Endothelial cell of umbilical vein (primary cell): ENCODE measurements at regions of chr9 and their contacts with region 1.

Region 1: DNA sequence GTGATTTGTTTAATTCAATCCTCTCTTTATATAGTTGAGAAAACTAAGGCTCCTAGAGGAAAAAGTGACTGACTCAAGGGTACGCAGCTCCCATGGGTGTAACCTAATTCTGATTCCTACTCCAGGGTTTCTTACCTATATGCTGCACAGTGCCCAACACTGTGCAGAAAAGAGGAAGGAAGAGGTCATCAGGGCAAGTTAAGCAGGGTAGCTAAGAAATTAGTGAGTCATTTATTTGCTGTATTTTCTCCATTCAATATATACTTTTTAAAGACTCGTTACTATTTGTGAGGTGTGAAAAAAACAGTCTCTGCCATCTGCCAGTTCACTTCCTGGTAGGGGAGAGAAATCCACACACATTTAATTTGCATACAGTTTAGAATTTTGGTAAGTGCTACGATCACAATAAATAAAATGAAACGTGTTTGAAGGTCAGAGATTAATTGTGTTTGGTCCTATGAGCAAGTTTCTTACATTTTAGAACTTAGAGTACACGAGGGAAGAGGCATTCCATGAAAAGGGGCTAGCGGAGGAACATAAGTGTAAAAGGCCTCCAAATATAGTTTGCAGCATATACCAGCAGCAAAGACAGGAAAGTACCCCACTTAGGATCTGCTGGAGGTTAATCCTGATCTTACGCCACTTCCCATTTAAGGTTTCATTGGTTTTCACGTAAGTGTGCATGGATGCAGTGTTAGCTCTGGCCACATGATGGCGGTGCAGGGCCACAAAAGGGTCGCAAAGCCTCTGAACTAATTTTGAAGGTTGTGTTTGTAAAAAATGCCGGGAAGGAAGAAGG is 59.9 kb upstream of the TLR4 start:
- DNase-seq: peak; percentile 86
- H3K4me3 ChIP-seq: no peak overlapping the region
- H3K27ac ChIP-seq: no peak overlapping the region
- H3K4me1 ChIP-seq: peaks cover 6% of the 10 kb centered on the region
- H3K27me3 ChIP-seq: peaks cover 9 to 15% of the 10 kb centered on the region in 2 experiments
- CTCF ChIP-seq: peak; percentile 89 to 97
- POLR2A ChIP-seq: no peak

Region 2: GRCh38 chr9:116966199-116966598 is 678.1 kb before region 1 on chr9:
- CTCF ChIA-PET with region 1: no interaction called
- POLR2A ChIA-PET with region 1: no interaction called
- dilution Hi-C with region 1: no loop called
- intact Hi-C with region 1: no loop called
- DNase-seq: no peak
- H3K4me3 ChIP-seq: no peak overlapping the region
- H3K27ac ChIP-seq: no peak overlapping the region
- H3K4me1 ChIP-seq: no peaks in the 10 kb centered on the region
- H3K27me3 ChIP-seq: no peaks in the 10 kb centered on the region
- CTCF ChIP-seq: no peak
- POLR2A ChIP-seq: no peak

Region 3: DNA sequence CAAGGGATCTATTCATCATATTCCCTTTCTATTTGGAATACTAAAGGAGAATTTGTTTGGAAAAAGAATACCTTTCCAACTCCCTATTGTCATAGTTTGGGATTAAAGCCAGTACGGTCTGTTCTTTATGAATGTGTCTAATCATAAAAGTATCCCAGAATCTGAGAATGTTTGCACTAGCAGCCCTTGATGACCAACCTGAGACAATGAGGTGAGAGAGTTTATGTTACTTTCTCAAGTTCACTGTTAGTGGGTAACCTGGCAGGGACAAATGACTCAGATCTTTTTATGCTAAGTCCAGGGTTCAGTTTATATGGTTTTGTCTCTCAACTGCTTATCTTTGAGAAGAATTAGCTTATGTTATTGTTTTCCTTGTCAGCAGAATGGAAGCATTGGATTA is 34.5 kb after region 1 on chr9:
- CTCF ChIA-PET with region 1: interaction called, 11 read pairs
- POLR2A ChIA-PET with region 1: no interaction called
- dilution Hi-C with region 1: no loop called
- intact Hi-C with region 1: loop called (anchors 1 kb)
- DNase-seq: peak; percentile 82
- H3K4me3 ChIP-seq: peak overlapping the region in 2 of 3 experiments; percentile 43 to 68
- H3K27ac ChIP-seq: peak overlapping the region; percentile 85
- H3K4me1 ChIP-seq: peaks cover 45% of the 10 kb centered on the region
- H3K27me3 ChIP-seq: no peaks in the 10 kb centered on the region
- CTCF ChIP-seq: no peak
- POLR2A ChIP-seq: no peak

Region 4: DNA sequence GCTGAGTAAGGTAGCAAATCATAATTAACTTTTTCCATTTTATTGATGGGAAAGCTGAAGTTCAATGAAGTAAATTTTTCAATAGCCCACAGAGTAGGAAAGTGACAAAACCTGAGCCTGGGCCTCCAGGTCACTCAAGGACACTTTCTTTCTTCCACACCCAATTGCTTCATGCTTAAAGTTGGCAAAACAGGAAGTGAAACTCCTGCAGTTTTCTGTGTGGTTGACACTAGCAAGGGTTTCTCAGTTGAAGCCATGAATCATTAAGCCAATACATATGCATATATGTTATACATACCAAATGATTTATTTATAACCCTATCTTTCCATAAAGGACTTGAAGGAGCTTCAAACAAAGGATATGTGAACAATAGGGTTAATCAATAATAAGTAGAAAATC is 73.8 kb after region 1 on chr9:
- CTCF ChIA-PET with region 1: interaction called, 3 read pairs
- POLR2A ChIA-PET with region 1: no interaction called
- dilution Hi-C with region 1: no loop called
- intact Hi-C with region 1: loop called (anchors 2 kb)
- DNase-seq: peak; percentile 54
- H3K4me3 ChIP-seq: no peak overlapping the region
- H3K27ac ChIP-seq: no peak overlapping the region
- H3K4me1 ChIP-seq: peaks cover 28% of the 10 kb centered on the region
- H3K27me3 ChIP-seq: no peaks in the 10 kb centered on the region
- CTCF ChIP-seq: no peak
- POLR2A ChIP-seq: no peak

Region 5: GRCh38 chr9:117768735-117769400 is 124.5 kb after region 1 on chr9:
- CTCF ChIA-PET with region 1: no interaction called
- POLR2A ChIA-PET with region 1: no interaction called
- dilution Hi-C with region 1: no loop called
- intact Hi-C with region 1: no loop called
- DNase-seq: no peak
- H3K4me3 ChIP-seq: no peak overlapping the region
- H3K27ac ChIP-seq: no peak overlapping the region
- H3K4me1 ChIP-seq: no peaks in the 10 kb centered on the region
- H3K27me3 ChIP-seq: no peaks in the 10 kb centered on the region
- CTCF ChIP-seq: no peak
- POLR2A ChIP-seq: no peak

Region 6: DNA sequence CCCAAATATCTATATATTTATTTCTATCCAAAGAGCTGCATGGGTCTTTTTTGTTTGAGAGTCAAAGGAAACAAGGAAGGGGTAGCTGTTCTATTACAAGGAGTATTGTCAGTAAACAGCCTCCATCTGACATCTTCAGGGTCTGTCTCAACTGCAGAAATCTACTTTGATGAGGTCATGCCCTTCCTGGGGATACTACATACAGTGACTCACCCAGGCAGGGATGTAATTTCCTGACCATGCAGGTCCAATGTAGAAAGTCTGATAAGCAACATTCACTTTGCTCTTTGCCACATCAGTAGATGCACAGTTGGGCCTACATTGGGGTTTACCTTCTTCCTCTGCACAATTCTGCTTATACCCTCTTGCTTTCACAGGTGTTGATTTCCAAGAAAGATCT is 225.4 kb after region 1 on chr9:
- CTCF ChIA-PET with region 1: no interaction called
- POLR2A ChIA-PET with region 1: no interaction called
- dilution Hi-C with region 1: no loop called
- intact Hi-C with region 1: loop called (anchors 10 kb)
- DNase-seq: no peak
- H3K4me3 ChIP-seq: no peak overlapping the region
- H3K27ac ChIP-seq: no peak overlapping the region
- H3K4me1 ChIP-seq: no peaks in the 10 kb centered on the region
- H3K27me3 ChIP-seq: no peaks in the 10 kb centered on the region
- CTCF ChIP-seq: no peak
- POLR2A ChIP-seq: no peak

Region 7: GRCh38 chr9:118170032-118170955 is 526.0 kb after region 1 on chr9:
- CTCF ChIA-PET with region 1: no interaction called
- POLR2A ChIA-PET with region 1: no interaction called
- dilution Hi-C with region 1: no loop called
- intact Hi-C with region 1: loop called (anchors 1 kb)
- DNase-seq: peak; percentile 42
- H3K4me3 ChIP-seq: no peak overlapping the region
- H3K27ac ChIP-seq: no peak overlapping the region
- H3K4me1 ChIP-seq: no peaks in the 10 kb centered on the region
- H3K27me3 ChIP-seq: no peaks in the 10 kb centered on the region
- CTCF ChIP-seq: peak; percentile 53 to 56
- POLR2A ChIP-seq: no peak

Region 8: DNA sequence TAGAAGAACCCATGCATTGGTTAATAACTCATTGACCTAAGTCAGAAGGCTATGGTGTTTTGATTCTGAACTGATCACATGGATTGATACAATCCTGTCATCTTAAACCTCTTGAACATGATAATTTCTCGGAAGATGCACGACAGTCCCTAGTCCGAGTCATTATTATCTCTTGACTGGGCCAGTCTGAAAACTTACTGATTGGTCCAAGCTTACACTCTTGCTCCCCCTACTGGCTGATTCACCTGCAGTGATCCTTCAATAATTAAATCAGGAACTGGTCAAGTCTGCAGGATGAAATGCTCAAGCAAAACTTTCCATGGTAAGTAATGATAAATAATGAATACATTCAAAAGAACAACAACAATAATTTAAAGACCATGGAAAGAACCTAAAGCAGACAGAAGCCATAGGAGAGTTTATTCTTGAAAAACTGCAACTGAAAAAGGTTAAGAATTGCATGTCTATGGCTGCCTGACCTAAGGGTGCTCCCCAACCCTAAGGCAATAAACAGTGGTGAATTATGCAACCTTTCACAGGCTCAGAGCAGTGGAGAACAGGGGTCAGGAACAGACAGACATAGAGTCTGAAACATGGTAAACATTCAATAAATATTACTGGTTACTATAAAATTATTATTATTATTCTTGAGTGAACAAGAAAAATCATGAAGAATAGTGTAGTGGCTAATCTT is 1645.6 kb after region 1 on chr9:
- CTCF ChIA-PET with region 1: no interaction called
- POLR2A ChIA-PET with region 1: no interaction called
- dilution Hi-C with region 1: no loop called
- intact Hi-C with region 1: loop called (anchors 1 kb)
- DNase-seq: peak; percentile 26
- H3K4me3 ChIP-seq: no peak overlapping the region
- H3K27ac ChIP-seq: no peak overlapping the region
- H3K4me1 ChIP-seq: no peaks in the 10 kb centered on the region
- H3K27me3 ChIP-seq: no peaks in the 10 kb centered on the region
- CTCF ChIP-seq: peak; percentile 45 to 47
- POLR2A ChIP-seq: no peak

Region 9: DNA sequence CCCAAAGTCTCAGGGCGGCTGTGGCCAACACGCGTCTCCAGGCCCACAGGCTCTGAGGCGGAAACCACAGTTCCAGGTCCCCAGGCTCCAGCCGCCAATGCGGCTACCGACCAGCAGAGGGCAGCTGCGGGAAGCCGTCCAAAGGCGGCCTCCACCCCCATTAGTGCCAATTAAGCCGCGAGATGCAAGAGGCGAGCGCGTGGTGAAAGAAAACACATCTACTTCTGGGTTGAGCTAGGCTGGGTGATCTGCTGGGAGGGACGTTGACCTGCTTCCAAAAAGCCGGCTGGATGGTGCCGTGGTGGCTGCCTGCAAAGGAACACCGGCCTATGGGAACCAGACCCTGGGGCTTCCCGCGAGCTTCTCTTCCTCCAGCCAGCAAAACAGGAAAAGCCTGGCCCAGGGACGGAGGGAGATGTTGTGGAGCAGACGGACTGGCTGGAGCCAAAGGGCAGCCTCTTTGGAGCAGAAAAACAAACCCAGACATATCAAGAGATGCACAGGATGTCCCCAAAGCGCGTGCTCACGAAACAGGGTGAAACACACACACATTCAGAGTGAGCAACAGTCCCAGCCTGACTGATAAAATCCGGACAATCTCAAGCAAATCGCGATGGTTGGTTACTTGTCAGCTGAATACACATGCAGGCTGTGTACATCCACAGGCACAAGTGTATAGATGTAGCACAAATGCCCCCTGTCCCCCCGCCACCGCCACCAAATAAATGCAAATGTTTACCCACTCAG is 1912.0 kb after region 1 on chr9:
- CTCF ChIA-PET with region 1: interaction called, 6 read pairs
- POLR2A ChIA-PET with region 1: no interaction called
- dilution Hi-C with region 1: no loop called
- intact Hi-C with region 1: loop called (anchors 5 kb)
- DNase-seq: peak; percentile 80
- H3K4me3 ChIP-seq: peak overlapping the region in 2 of 3 experiments; percentile 15 to 30
- H3K27ac ChIP-seq: no peak overlapping the region
- H3K4me1 ChIP-seq: peaks cover 5% of the 10 kb centered on the region
- H3K27me3 ChIP-seq: no peaks in the 10 kb centered on the region
- CTCF ChIP-seq: peak; percentile 88 to 96
- POLR2A ChIP-seq: no peak